ENCODE measurements at regions of chr4 and their contacts with region 1.

Region 1: GRCh38 chr4:41360214-41360920 is 103.6 kb downstream of the UCHL1 start:
- DNase-seq: peak; percentile 56 to 78
- H3K4me3 ChIP-seq: peak overlapping the region; percentile 91
- H3K27ac ChIP-seq: peak overlapping the region; percentile 71
- H3K4me1 ChIP-seq: peaks cover 34% of the 10 kb centered on the region
- H3K27me3 ChIP-seq: no peaks in the 10 kb centered on the region
- CTCF ChIP-seq: no peak

Region 2: GRCh38 chr4:41287050-41287449 is 73.3 kb before region 1 on chr4:
- CTCF ChIA-PET with region 1: interaction called, 9 read pairs
- POLR2A ChIA-PET with region 1: interaction called, 3 read pairs
- intact Hi-C with region 1: loop called (anchors 1 kb)
- DNase-seq: peak; percentile 44 to 96
- H3K4me3 ChIP-seq: no peak overlapping the region
- H3K27ac ChIP-seq: peak overlapping the region; percentile 89
- H3K4me1 ChIP-seq: peaks cover 40% of the 10 kb centered on the region
- H3K27me3 ChIP-seq: no peaks in the 10 kb centered on the region
- CTCF ChIP-seq: no peak

Region 3: GRCh38 chr4:41432881-41433280 is 72.5 kb after region 1 on chr4:
- CTCF ChIA-PET with region 1: no interaction called
- POLR2A ChIA-PET with region 1: interaction called, 6 read pairs
- intact Hi-C with region 1: loop called (anchors 5 kb)
- DNase-seq: peak; percentile 21 to 94
- H3K4me3 ChIP-seq: no peak overlapping the region
- H3K27ac ChIP-seq: peak overlapping the region; percentile 85
- H3K4me1 ChIP-seq: peaks cover 56% of the 10 kb centered on the region
- H3K27me3 ChIP-seq: no peaks in the 10 kb centered on the region
- CTCF ChIP-seq: no peak

Region 4: DNA sequence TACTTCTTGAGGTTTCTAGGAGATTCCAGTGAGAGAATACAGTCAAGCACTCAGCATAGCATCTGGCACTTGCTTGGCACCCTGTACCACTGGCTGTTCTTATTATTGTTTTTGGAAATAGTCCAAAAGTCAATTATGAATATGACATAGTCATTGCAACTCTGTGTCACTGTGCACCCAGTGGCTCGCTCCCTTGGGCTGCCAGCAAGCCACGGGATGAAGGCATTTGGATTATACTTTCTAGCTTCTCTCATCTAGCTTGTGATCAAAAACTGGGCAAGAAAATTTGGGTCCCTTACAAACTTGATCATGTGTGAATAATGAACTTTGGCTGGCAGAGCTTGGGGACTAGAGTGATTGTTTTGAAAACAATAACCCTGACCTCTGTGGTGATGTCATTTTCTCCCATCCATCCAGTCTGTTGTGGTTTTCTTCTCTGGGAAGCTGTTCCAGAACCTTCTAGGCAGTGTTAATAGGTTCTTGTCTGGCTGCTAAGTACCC is 144.8 kb after region 1 on chr4:
- CTCF ChIA-PET with region 1: no interaction called
- POLR2A ChIA-PET with region 1: no interaction called
- intact Hi-C with region 1: loop called (anchors 2 kb)
- DNase-seq: peak in 1 of 2 experiments; percentile 31
- H3K4me3 ChIP-seq: no peak overlapping the region
- H3K27ac ChIP-seq: no peak overlapping the region
- H3K4me1 ChIP-seq: no peaks in the 10 kb centered on the region; the same call in 1 of the 2 replicates
- H3K27me3 ChIP-seq: no peaks in the 10 kb centered on the region
- CTCF ChIP-seq: no peak

Region 5: DNA sequence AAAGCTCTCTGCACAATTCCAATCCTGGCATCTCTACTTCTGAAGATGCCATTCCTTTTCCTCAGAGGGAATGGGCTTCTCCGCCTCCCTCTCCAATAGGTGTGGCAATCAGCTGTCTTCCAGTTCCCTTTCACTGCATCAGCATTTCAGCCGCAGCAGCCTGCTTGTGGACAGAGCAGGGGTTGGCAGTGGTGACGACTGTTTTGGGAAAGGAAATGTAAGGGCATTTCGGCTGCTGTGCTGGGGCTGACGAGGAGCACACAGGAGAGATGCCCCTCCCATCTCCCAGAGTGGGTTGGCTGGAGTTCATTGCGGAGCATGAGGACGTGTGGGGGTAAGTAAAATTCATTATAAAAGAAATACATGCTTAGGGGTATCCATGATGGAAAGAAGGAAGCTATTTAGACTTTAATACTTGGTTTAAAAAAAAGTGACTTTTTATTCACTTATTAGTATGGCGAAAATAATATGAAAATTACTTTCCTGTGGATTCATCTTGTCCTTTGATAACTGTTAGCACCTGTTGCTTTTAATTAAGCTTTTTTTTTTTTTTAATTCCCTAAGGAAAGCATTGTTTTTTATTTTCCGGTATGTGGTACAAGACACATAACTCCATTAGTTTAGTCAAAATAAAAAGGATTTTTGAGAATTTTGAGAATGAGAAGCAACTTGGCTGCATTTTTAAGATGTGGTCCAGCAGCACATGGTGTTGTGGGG is 177.8 kb after region 1 on chr4 and contains the start of gene LIMCH1:
- CTCF ChIA-PET with region 1: no interaction called
- POLR2A ChIA-PET with region 1: no interaction called
- intact Hi-C with region 1: loop called (anchors 2 kb)
- DNase-seq: peak in 1 of 2 experiments; percentile 65
- H3K4me3 ChIP-seq: peak within 1 kb of the TSS; percentile 44
- H3K27ac ChIP-seq: peak within 1 kb of the TSS; percentile 96
- H3K4me1 ChIP-seq: peaks cover 65% of the 10 kb centered on the region
- H3K27me3 ChIP-seq: no peaks in the 10 kb centered on the region
- CTCF ChIP-seq: no peak
- total RNA-seq, gene LIMCH1: 252 and 339 TPM in 2 replicates

Region 6: DNA sequence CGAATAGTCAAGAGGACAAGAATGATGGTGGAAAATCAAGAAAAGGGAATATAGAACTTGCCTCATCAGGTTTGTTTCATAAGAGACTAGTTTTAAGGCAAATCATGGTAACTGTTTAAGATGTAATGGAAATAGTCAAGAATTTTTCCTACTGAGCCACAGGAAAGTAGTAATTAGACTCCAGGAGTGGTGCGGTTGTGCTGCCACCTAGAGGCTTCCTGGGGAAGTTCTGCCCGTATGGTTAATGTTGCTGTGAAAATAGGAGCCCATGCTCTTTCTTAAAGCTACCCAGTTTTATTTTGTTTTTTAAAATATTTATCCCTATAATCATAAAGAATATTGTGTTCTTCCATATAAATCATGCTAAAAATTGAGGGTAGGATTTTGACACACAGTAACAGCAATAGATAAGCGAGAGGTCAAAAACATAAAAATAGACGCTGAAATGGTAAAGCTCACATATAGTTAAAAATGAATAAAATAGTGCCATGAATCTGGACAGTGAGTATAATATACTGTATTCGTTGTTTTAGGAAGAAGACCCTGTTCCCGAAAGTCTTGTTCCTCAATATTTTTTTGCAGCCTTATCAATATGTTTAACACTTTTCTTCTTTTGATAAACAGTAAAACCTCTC is 301.2 kb after region 1 on chr4:
- CTCF ChIA-PET with region 1: interaction called, 9 read pairs
- POLR2A ChIA-PET with region 1: no interaction called
- intact Hi-C with region 1: loop called (anchors 2 kb)
- DNase-seq: peak in 1 of 2 experiments; percentile 63
- H3K4me3 ChIP-seq: no peak overlapping the region
- H3K27ac ChIP-seq: peak overlapping the region; percentile 31
- H3K4me1 ChIP-seq: peaks cover 25% of the 10 kb centered on the region
- H3K27me3 ChIP-seq: no peaks in the 10 kb centered on the region
- CTCF ChIP-seq: peak; percentile 92

Measured in PC-9 (cell line).